Activated CD4-positive, alpha-beta T cell treated with anti-CD3 and anti-CD28 coated beads, Interleukin-2, amount 10 ng/mL, durations not matched to agents 24 days and 14 days (primary cell): ENCODE measurements at regions of chr3 and their contacts with region 1.

Region 1: GRCh38 chr3:45938864-45939263 is 4.4 kb upstream of the CXCR6 start:
- DNase-seq: peak; percentile 94
- H3K4me3 Mint-ChIP-seq: no peak overlapping the region
- H3K27ac Mint-ChIP-seq: peak overlapping the region; percentile 23
- H3K4me1 Mint-ChIP-seq: peaks cover 50% of the 10 kb centered on the region
- H3K27me3 Mint-ChIP-seq: no peaks in the 10 kb centered on the region

Region 2: DNA sequence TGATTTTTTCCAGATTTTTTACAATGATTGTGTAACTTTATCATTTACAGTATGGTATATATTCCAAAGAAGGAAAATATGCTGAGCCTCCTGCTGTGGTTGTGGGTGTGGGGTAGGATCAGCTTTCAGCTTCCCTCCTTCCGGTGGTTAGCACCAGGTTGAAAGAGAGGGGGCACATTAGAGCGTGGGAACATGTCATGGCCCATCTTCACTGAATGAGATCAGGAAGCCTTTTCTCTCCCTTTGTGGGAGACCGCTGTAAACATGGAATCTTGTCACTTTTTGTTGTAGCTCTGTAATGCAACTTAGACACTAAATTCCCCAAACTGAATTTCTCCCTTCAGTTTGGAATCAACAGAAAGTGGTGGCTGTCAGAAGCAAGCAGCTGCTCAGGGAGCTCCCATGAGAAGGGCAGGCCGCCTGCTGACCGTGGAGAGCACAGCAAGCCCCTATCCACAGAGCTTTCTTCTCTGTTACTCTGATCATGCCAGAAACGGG is 431.0 kb before region 1 on chr3:
- intact Hi-C with region 1: loop called (anchors 5 kb)
- DNase-seq: no peak
- H3K4me3 Mint-ChIP-seq: no peak overlapping the region
- H3K27ac Mint-ChIP-seq: no peak overlapping the region
- H3K4me1 Mint-ChIP-seq: peaks cover 7% of the 10 kb centered on the region
- H3K27me3 Mint-ChIP-seq: no peaks in the 10 kb centered on the region

Region 3: GRCh38 chr3:45870099-45870498 is 68.8 kb before region 1 on chr3:
- intact Hi-C with region 1: no loop called
- DNase-seq: peak; percentile 76
- H3K4me3 Mint-ChIP-seq: no peak overlapping the region
- H3K27ac Mint-ChIP-seq: no peak overlapping the region
- H3K4me1 Mint-ChIP-seq: peaks cover 17% of the 10 kb centered on the region
- H3K27me3 Mint-ChIP-seq: peaks cover 76% of the 10 kb centered on the region

Region 4: GRCh38 chr3:45958321-45958791 is 19.5 kb after region 1 on chr3:
- intact Hi-C with region 1: loop called (anchors 1 kb)
- DNase-seq: no peak
- H3K4me3 Mint-ChIP-seq: no peak overlapping the region
- H3K27ac Mint-ChIP-seq: no peak overlapping the region
- H3K4me1 Mint-ChIP-seq: peaks cover 43% of the 10 kb centered on the region
- H3K27me3 Mint-ChIP-seq: no peaks in the 10 kb centered on the region

Region 5: DNA sequence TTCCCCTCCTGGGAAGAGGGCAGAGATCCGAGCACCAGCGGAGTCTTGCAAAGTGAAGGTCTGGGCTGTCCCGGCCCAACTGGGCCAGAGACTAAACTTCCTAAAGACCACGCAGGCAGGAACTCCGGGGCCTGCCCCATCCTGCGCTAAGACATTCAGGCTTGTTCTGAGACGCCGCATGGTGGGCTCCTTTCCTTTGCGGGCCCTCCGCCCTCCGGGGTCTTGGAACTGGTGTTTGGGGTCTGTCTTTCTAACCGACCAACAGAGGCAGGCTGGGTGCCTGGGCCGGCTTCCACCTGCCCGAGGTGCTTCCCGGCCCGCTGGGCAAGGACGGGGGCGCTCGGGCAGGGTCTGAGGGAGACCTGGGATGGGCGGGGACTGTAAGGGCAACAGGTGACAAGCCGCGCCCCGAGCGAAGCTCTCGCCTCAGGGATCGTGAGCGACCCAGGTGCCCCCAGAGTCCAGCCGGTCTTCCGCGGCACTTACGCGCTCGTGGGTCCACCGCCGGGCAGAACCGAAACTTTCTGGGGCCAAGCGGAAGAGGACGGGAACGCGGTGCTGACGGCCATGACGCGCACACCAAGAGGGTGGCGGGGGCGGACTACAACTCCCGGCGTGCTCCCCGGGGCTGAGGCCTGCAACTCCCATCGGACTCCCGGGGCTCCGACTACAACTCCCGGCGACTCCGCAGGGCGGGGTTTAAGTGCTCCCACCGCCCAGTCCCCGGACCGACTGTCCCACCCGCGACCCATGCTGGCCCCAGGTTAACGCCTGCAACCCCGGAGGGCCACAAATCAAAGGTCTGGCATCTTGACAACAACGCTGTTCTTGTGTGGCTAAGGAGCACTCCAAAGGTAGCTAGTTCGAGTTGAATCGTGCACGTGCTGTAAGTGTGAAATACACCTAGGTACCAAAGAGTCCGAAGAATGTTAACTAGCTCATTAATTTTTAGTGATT is 56.6 kb after region 1 on chr3 and contains the start of gene FYCO1:
- intact Hi-C with region 1: loop called (anchors 1 kb)
- DNase-seq: peak; percentile 96
- H3K4me3 Mint-ChIP-seq: peak within 1 kb of the TSS; percentile 89
- H3K27ac Mint-ChIP-seq: peak within 1 kb of the TSS; percentile 96
- H3K4me1 Mint-ChIP-seq: peaks cover 50% of the 10 kb centered on the region
- H3K27me3 Mint-ChIP-seq: peaks cover 22% of the 10 kb centered on the region
- total RNA-seq, gene FYCO1: 16.5 and 16.8 TPM in 2 replicates

Region 6: DNA sequence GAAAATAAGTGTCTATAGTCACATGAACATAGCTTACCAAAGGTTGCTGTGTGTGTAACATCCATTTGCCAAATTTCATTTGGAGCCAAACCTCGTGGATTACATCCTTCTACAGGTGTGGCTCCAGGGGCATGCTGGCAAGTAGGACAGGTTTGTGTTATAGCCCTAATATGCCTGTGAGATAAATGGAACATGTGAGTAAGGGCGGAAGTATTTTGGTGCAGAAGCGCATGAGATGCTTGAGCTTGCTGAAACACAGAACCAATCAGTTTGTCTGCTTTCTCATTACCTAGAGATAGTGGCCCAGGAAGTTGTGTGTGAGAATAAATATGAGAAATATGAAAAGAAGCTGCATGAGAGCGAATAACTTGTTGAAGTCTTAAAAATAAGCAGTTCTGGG is 110.3 kb after region 1 on chr3:
- intact Hi-C with region 1: no loop called
- DNase-seq: peak; percentile 49
- H3K4me3 Mint-ChIP-seq: no peak overlapping the region
- H3K27ac Mint-ChIP-seq: no peak overlapping the region
- H3K4me1 Mint-ChIP-seq: peaks cover 15% of the 10 kb centered on the region
- H3K27me3 Mint-ChIP-seq: peaks cover 34% of the 10 kb centered on the region

Region 7: GRCh38 chr3:46070595-46071093 is 131.8 kb after region 1 on chr3:
- intact Hi-C with region 1: loop called (anchors 1 kb)
- DNase-seq: no peak
- H3K4me3 Mint-ChIP-seq: peak overlapping the region; percentile 47
- H3K27ac Mint-ChIP-seq: peak overlapping the region; percentile 68
- H3K4me1 Mint-ChIP-seq: peaks cover 58% of the 10 kb centered on the region
- H3K27me3 Mint-ChIP-seq: peaks cover 39% of the 10 kb centered on the region

Region 8: GRCh38 chr3:46208167-46208704 is 269.4 kb after region 1 on chr3 and contains the start of gene CCR1:
- intact Hi-C with region 1: loop called (anchors 5 kb)
- DNase-seq: peak; percentile 89
- H3K4me3 Mint-ChIP-seq: peak within 1 kb of the TSS; percentile 73
- H3K27ac Mint-ChIP-seq: peak within 1 kb of the TSS; percentile 74
- H3K4me1 Mint-ChIP-seq: peaks cover 56% of the 10 kb centered on the region
- H3K27me3 Mint-ChIP-seq: peaks cover 2% of the 10 kb centered on the region
- total RNA-seq, gene CCR1: 5.9 and 6.7 TPM in 2 replicates

Region 9: DNA sequence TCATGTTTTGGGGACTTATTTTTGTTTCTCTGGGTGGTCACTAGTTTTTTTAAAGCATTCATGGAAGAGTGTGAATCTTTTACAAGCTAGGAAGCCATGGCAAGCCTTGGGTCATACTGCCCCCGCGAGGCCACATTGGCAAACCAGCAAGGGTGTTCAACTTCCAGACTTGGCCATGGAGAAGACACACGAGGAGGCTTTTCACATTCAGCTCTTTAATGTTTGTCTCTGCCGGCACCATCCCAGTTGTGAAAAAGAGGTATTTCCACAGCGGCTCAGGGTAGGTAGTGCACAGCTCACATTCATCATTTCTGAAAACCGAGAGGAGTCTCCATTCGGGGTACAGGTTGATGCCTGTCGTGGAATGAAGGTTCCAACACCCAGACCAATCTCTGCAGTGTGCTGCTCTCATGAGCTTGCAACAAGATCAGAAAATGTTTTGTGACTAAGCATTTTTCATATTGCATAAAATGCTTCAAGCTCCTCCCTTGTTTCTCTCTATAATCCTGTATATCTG is 439.6 kb after region 1 on chr3:
- intact Hi-C with region 1: loop called (anchors 1 kb)
- DNase-seq: peak; percentile 90
- H3K4me3 Mint-ChIP-seq: no peak overlapping the region
- H3K27ac Mint-ChIP-seq: peak overlapping the region; percentile 57
- H3K4me1 Mint-ChIP-seq: peaks cover 42% of the 10 kb centered on the region
- H3K27me3 Mint-ChIP-seq: peaks cover 23% of the 10 kb centered on the region